ENCODE measurements at regions of chr2 and their contacts with region 1.

Region 1: DNA sequence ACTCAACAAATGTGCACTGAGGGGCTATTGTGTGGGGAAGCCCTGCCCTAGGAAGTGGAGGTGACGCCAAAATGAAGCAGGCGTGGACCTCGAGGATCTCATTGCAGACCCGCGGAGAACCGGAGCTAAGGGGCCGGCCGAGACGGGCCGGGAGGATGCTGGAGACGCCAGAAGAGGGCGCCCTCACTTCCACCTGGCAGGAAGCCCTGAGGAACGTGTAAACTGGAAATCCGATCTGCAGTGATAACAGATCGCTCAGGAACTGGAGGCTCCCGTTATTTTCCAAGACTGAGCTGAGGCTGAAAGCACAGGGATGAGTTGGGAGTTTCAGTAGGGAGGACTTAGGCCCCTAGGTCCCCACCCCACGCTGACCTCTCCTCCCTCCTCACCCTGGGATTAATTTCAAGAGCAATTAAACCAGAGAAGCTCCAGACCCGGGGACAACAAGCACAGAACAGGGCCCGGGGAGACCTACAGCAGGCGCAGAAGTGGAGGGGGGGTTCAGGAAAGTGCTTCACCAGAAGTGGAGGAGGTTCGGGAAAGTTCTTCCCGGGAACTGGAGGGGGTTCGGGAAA is 7.7 kb upstream of the COL6A3 start:
- DNase-seq: peak; percentile 62 to 87
- H3K4me3 ChIP-seq: peak overlapping the region; percentile 32; the same call in 1 of the 2 replicates
- H3K27ac ChIP-seq: no peak overlapping the region
- H3K4me1 ChIP-seq: no peaks in the 10 kb centered on the region; the same call in 1 of the 2 replicates
- H3K27me3 ChIP-seq: no peaks in the 10 kb centered on the region
- CTCF ChIP-seq: peak; percentile 91

Region 2: DNA sequence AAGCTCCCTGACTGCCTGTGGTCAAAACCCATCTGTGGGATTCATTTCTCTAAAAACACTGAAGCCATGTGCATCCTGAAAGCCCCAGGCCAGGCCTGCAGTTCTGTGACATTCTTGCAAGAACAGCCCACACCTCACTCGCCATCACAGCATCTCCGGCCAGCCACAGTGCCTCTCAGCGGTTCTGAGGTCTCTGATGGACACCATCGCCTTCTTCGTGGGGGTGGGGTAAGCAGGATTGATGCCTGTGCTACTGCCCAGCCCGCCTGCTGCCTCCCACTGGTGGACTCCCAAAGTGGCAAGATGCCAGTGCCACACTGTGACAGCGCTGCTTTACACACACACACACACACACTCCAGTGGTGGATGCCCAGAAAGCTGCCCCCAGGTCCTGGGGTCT is 139.6 kb after region 1 on chr2:
- CTCF ChIA-PET with region 1: no interaction called
- POLR2A ChIA-PET with region 1: interaction called, 11 read pairs
- intact Hi-C with region 1: no loop called
- DNase-seq: no peak
- H3K4me3 ChIP-seq: no peak overlapping the region
- H3K27ac ChIP-seq: no peak overlapping the region
- H3K4me1 ChIP-seq: no peaks in the 10 kb centered on the region
- H3K27me3 ChIP-seq: peaks cover 16% of the 10 kb centered on the region
- CTCF ChIP-seq: no peak